ENCODE measurements at regions of chr1 and their contacts with region 1.

Region 1: GRCh38 chr1:202122639-202123335 is at the start of gene GPR37L1:
- DNase-seq: peak; percentile 36
- H3K4me3 ChIP-seq: no peak within 1 kb of the TSS
- H3K27ac ChIP-seq: no peak within 1 kb of the TSS
- H3K4me1 ChIP-seq: no peaks in the 10 kb centered on the region
- H3K27me3 ChIP-seq: no peaks in the 10 kb centered on the region; the same call in none of the 2 replicates
- total RNA-seq, gene GPR37L1: not detected in 2 replicates

Region 2: GRCh38 chr1:201895913-201896807 is 226.6 kb before region 1 on chr1:
- in situ Hi-C with region 1: loop called (anchors 25 kb)
- DNase-seq: peak; percentile 95
- H3K4me3 ChIP-seq: no peak overlapping the region
- H3K27ac ChIP-seq: no peak overlapping the region
- H3K4me1 ChIP-seq: 0 out of 2 replicates have a peak, but pooled peaks cover 6% of the 10 kb centered on the region
- H3K27me3 ChIP-seq: no peaks in the 10 kb centered on the region

Region 3: DNA sequence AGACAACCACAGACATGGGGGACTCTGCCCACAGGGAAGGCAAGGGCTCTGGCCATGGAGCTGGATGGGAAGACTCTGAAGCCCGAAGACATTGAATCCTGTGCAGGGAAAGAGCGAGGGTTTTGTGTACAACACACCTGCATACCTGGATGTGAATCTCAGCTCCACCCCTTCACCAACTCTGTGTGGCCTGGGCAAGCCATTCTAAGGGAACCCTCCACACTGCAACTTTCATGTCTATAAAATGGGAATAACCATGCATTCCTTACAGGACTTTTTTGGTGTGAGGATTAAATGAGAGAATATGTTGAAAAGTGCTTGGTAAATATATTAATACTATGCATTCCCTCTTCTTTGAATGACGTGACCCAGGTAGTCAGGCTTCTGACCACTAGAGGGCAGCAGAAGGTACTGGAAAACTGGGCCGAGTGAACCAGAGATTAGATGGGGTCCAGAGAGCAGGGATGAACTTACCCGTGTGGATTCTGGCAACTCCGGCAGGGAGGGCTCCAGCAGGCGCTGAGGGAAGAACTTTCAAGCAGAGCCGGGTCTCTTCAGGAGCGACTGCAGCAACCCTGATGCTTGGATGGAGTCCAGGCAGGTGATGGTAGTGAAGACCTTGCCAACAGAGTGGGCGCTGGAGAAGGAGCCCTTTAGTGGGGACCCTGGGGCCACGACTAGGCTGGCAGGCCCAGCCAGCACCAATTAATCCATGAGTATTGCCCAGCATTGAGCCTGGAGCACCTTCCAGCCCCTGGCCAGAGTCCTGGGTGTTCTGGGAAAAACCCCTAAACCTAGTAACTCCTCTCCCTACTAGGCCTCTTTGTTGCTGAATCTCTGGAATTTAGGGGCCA is 113.2 kb before region 1 on chr1:
- in situ Hi-C with region 1: loop called (anchors 5 kb)
- DNase-seq: peak; percentile 80
- H3K4me3 ChIP-seq: no peak overlapping the region
- H3K27ac ChIP-seq: no peak overlapping the region
- H3K4me1 ChIP-seq: no peaks in the 10 kb centered on the region
- H3K27me3 ChIP-seq: no peaks in the 10 kb centered on the region